ENCODE measurements at regions of chr2 and their contacts with region 1.

Region 1: GRCh38 chr2:162007447-162008040 is 66.5 kb downstream of the DPP4 start:
- DNase-seq: no peak
- H3K4me3 ChIP-seq: no peak overlapping the region
- H3K27ac ChIP-seq: no peak overlapping the region
- H3K4me1 ChIP-seq: no peaks in the 10 kb centered on the region
- H3K27me3 ChIP-seq: no peaks in the 10 kb centered on the region
- CTCF ChIP-seq: peak; percentile 78

Region 2: DNA sequence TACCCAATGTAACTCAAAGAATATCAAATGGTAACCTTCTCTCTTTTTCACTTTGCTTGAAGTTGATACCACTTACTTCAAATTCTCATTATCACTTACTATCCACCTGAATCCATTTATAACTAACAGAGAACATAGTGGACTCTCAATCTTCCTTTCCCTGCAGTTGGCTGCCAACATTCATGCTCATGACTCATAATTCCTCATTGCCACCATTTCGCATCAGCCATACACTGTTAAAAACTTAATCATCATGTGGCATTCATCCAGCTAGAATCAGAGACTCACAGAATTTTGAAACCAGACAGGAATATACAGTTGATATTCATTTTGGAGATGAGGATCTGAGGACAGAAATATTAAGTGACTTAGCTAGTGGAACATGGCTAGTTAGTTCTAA is 326.5 kb before region 1 on chr2:
- intact Hi-C with region 1: no loop called
- DNase-seq: no peak
- H3K4me3 ChIP-seq: no peak overlapping the region
- H3K27ac ChIP-seq: no peak overlapping the region
- H3K4me1 ChIP-seq: no peaks in the 10 kb centered on the region
- H3K27me3 ChIP-seq: no peaks in the 10 kb centered on the region
- CTCF ChIP-seq: no peak

Region 3: DNA sequence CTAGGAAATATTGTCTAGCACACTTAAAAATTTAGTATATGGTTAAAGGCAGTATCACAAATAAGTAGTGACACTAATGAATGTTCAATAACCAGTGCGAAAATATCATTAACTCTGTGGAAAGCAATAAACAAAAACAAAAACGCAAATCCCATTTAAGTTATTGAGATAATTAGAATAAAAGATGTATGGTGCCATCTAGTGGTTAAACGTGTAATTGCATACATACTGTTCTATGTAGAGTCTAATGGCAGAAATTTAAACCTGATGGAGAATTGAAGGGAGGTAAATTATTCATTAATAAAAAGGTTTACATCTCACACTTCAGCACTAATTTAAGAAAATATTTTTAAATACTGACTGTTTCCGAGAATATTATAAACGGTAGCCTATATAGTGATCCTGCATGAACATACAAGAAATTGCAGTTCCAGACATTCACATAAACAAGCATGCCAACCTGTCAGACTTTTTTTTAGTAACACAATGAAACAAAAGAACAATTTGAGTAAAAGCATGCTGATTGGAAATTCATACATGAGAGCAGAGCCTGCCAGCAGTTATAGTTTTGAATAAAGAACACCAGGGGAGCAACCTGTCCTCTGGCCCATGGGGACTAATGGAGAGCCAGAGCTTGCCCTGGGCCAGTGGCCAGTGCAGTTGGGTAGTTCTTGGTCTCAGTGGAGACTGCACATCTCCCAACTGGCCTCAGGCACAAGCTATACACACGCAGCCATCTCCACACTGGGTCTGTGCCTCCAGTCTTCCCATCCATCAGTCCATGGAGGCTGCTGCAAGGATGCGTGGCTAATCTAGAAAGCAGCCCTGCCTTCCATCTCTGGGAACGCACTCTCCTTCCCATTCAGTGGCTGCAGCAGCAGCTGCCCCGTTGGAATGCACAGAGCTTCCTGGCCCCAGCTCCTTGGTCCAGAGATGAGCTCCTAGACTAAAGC is 116.5 kb after region 1 on chr2:
- intact Hi-C with region 1: loop called (anchors 5 kb)
- DNase-seq: no peak
- H3K4me3 ChIP-seq: no peak overlapping the region
- H3K27ac ChIP-seq: no peak overlapping the region
- H3K4me1 ChIP-seq: peaks cover 2% of the 10 kb centered on the region
- H3K27me3 ChIP-seq: no peaks in the 10 kb centered on the region
- CTCF ChIP-seq: peak; percentile 87

Region 4: DNA sequence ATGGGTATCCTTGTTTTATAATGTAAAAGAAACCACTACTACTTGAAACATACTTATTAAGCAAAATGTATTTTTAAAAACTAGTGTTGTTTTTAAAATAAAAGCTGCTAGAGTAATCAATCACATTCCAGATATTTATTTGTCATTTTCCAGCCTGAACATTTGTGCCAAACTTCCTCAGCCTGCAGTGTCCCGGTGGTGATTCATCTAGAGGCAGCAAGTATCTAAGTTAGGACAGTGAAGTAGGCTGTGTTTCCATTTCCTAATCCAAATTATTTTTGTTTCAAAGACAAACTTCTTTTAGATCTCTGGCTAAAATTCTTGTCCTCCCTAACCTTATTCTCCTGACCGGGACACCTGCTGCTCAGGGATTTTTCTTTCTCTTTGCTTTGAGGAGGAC is 157.3 kb after region 1 on chr2:
- intact Hi-C with region 1: no loop called
- DNase-seq: no peak
- H3K4me3 ChIP-seq: no peak overlapping the region
- H3K27ac ChIP-seq: no peak overlapping the region
- H3K4me1 ChIP-seq: no peaks in the 10 kb centered on the region
- H3K27me3 ChIP-seq: no peaks in the 10 kb centered on the region
- CTCF ChIP-seq: no peak

Measured in left ventricle myocardium inferior (tissue), 1 donor.